ENCODE measurements at regions of chr9 and their contacts with region 1.

Region 1: DNA sequence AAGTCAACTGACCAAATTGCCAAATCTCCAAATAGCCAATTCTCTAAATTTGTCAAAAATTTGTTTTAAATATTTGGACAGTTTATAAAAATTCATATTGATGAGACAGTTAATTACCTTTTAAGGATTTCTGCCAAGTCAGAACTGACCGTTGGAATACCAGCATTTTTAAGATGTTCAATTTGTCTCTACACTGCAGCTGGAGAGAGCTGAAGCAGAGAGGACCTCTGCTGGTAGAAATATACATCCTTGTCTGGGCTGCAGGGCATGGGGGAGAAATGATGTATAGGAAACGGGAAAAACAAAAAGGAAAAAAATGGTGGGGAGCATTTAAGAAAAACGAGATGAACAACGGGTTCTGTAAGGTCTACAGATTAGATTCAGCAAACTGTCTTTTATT is 16.8 kb downstream of the NR6A1 start:
- DNase-seq: no peak
- ATAC-seq: peak; percentile 74
- H3K4me3 ChIP-seq: no peak overlapping the region
- H3K27ac ChIP-seq: no peak overlapping the region
- H3K4me1 ChIP-seq: peaks cover 76% of the 10 kb centered on the region
- H3K27me3 ChIP-seq: no peaks in the 10 kb centered on the region; a peak in 1 of 5 replicates
- CTCF ChIP-seq: peak; percentile 64
- EP300 ChIP-seq: no peak
- POLR2A ChIP-seq: no peak
- RAD21 ChIP-seq: no peak

Region 2: DNA sequence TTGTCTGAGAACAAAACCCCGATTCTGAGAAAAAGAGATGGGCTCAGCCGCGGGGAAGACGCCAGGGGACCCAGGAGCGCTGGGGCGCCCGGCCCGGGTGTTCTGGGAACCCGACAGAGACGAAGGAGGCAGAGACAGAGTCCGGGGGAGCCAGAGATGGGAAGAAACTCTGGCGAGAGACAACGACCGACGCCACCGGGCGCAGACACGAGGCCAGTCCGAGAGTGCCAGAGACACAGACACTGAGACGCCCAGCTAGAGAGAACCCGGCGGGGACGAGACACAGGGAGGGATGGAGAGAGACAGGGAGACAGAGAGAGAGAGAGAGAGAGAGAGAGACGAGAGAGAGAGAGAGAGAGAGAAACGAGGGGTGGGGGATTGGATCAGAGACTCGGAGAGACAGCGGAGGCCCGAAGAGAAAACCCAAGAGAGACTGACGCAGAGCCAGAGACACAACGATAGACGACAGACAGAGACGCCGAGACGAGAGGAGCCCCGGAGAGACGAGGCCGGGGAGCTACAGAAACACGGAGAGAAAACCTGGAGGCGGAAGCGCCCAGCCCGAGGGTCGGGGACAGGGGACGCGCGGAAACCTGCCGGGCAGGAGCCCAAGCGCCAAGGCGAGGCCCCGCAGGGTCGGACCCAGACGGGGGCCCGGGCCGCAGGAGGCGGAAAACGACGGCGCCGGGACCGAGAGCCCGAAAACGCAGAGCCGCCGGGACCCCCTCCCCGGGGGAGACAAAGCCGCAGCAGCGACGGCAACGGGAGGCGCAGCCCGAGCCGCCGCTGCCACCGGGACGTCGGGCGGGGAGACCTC is 250.4 kb before region 1 on chr9:
- CTCF ChIA-PET with region 1: no interaction called
- POLR2A ChIA-PET with region 1: no interaction called
- in situ Hi-C with region 1: no loop called
- intact Hi-C with region 1: no loop called
- DNase-seq: no peak
- ATAC-seq: no peak
- H3K4me3 ChIP-seq: peak overlapping the region in 2 of 3 experiments; percentile 35 to 57; a peak in 4 of 6 replicates
- H3K27ac ChIP-seq: no peak overlapping the region
- H3K4me1 ChIP-seq: peaks cover 35% of the 10 kb centered on the region
- H3K27me3 ChIP-seq: no peaks in the 10 kb centered on the region
- CTCF ChIP-seq: no peak
- EP300 ChIP-seq: no peak
- POLR2A ChIP-seq: no peak
- RAD21 ChIP-seq: no peak

Region 3: GRCh38 chr9:124537926-124538325 is 216.4 kb before region 1 on chr9:
- CTCF ChIA-PET with region 1: no interaction called
- POLR2A ChIA-PET with region 1: no interaction called
- in situ Hi-C with region 1: no loop called
- intact Hi-C with region 1: no loop called
- DNase-seq: no peak
- ATAC-seq: no peak
- H3K4me3 ChIP-seq: no peak overlapping the region
- H3K27ac ChIP-seq: no peak overlapping the region
- H3K4me1 ChIP-seq: peaks cover 7% of the 10 kb centered on the region; the same call in 1 of the 2 replicates
- H3K27me3 ChIP-seq: no peaks in the 10 kb centered on the region
- CTCF ChIP-seq: no peak
- EP300 ChIP-seq: no peak
- POLR2A ChIP-seq: no peak
- RAD21 ChIP-seq: no peak

Region 4: GRCh38 chr9:124551472-124552272 is 202.6 kb before region 1 on chr9:
- CTCF ChIA-PET with region 1: no interaction called
- POLR2A ChIA-PET with region 1: no interaction called
- in situ Hi-C with region 1: no loop called
- intact Hi-C with region 1: loop called (anchors 5 kb)
- DNase-seq: peak; percentile 53
- ATAC-seq: peak; percentile 94
- H3K4me3 ChIP-seq: no peak overlapping the region
- H3K27ac ChIP-seq: no peak overlapping the region
- H3K4me1 ChIP-seq: peaks cover 11% of the 10 kb centered on the region
- H3K27me3 ChIP-seq: no peaks in the 10 kb centered on the region; a peak in 1 of 5 replicates
- CTCF ChIP-seq: peak; percentile 87
- EP300 ChIP-seq: no peak
- POLR2A ChIP-seq: no peak
- RAD21 ChIP-seq: peak; percentile 88

Region 5: GRCh38 chr9:124617471-124618141 is 136.7 kb before region 1 on chr9:
- CTCF ChIA-PET with region 1: interaction called, 4 read pairs
- POLR2A ChIA-PET with region 1: no interaction called
- in situ Hi-C with region 1: no loop called
- intact Hi-C with region 1: loop called (anchors 2 kb)
- DNase-seq: peak; percentile 66
- ATAC-seq: peak; percentile 94
- H3K4me3 ChIP-seq: no peak overlapping the region
- H3K27ac ChIP-seq: no peak overlapping the region
- H3K4me1 ChIP-seq: peaks cover 23% of the 10 kb centered on the region
- H3K27me3 ChIP-seq: no peaks in the 10 kb centered on the region
- CTCF ChIP-seq: peak; percentile 92
- EP300 ChIP-seq: no peak
- POLR2A ChIP-seq: no peak
- RAD21 ChIP-seq: peak; percentile 93

Region 6: GRCh38 chr9:124686918-124687317 is 67.4 kb before region 1 on chr9:
- CTCF ChIA-PET with region 1: no interaction called
- POLR2A ChIA-PET with region 1: no interaction called
- in situ Hi-C with region 1: no loop called
- intact Hi-C with region 1: no loop called
- DNase-seq: no peak
- ATAC-seq: no peak
- H3K4me3 ChIP-seq: no peak overlapping the region
- H3K27ac ChIP-seq: no peak overlapping the region
- H3K4me1 ChIP-seq: 0 out of 2 replicates have a peak, but pooled peaks cover 1% of the 10 kb centered on the region
- H3K27me3 ChIP-seq: no peaks in the 10 kb centered on the region
- CTCF ChIP-seq: no peak
- EP300 ChIP-seq: no peak
- POLR2A ChIP-seq: no peak
- RAD21 ChIP-seq: no peak

Region 7: GRCh38 chr9:124697326-124698200 is 56.7 kb before region 1 on chr9:
- CTCF ChIA-PET with region 1: no interaction called
- POLR2A ChIA-PET with region 1: no interaction called
- in situ Hi-C with region 1: no loop called
- intact Hi-C with region 1: no loop called
- DNase-seq: no peak
- ATAC-seq: no peak
- H3K4me3 ChIP-seq: no peak overlapping the region
- H3K27ac ChIP-seq: no peak overlapping the region
- H3K4me1 ChIP-seq: peaks cover 55% of the 10 kb centered on the region
- H3K27me3 ChIP-seq: no peaks in the 10 kb centered on the region
- CTCF ChIP-seq: no peak
- EP300 ChIP-seq: no peak
- POLR2A ChIP-seq: no peak
- RAD21 ChIP-seq: no peak

Region 8: DNA sequence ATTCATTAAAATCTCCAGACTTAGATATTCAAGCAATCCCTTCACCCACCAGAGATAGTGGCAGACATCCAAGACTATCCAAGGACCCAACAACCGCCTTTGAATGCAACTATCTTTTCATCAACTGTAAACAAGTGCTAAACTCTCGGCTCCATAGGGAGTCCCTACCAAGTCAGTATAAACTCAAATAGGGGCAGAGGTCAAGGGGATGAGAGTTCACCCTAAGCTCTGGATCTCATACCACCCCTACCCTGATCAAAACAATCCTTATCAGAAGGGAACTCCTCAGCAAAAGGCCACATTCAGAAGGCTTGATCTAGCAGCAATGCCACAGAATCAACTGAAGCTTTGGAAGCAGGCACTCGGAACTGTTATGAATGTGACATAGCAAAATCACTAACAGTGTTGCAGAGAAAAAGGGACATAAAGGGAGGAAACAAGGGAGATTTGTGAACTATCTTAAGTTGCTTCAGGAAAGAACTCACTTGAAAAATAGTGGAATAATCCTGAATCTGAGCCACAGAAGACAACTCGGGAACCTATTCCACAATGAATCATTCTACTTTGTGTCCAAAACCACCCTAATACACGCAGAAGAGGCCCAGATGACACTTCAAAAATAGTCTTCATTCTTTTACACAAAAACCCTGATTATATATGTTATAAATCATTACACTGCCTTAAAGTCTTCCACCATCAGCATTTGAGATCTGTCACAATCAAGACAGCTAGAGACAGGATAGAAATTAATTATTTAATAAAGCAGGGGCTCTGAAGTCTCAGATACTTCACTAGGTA is 33.0 kb before region 1 on chr9:
- CTCF ChIA-PET with region 1: no interaction called
- POLR2A ChIA-PET with region 1: no interaction called
- in situ Hi-C with region 1: loop called (anchors 5 kb)
- intact Hi-C with region 1: no loop called
- DNase-seq: peak; percentile 90
- ATAC-seq: peak; percentile 91
- H3K4me3 ChIP-seq: peak overlapping the region in 1 of 3 experiments; percentile 13; a peak in 1 of 6 replicates
- H3K27ac ChIP-seq: peak overlapping the region; percentile 58
- H3K4me1 ChIP-seq: peaks cover 61% of the 10 kb centered on the region
- H3K27me3 ChIP-seq: no peaks in the 10 kb centered on the region
- CTCF ChIP-seq: no peak
- EP300 ChIP-seq: peak in 1 of 2 experiments; percentile 79; a peak in 2 of 4 replicates
- POLR2A ChIP-seq: no peak
- RAD21 ChIP-seq: no peak